Activated B cell treated with CpG ODN at 0.5 μM for 24 hours (primary cell): ENCODE measurements at regions of chr12 and their contacts with region 1.

Region 1: GRCh38 chr12:64486657-64487056 is 34.7 kb downstream of the TBK1 start:
- DNase-seq: no peak
- ATAC-seq: no peak
- H3K4me3 Mint-ChIP-seq: no peak overlapping the region
- H3K27ac Mint-ChIP-seq: no peak overlapping the region
- H3K4me1 Mint-ChIP-seq: no peaks in the 10 kb centered on the region
- H3K27me3 Mint-ChIP-seq: no peaks in the 10 kb centered on the region
- CTCF ChIP-seq: no peak

Region 2: DNA sequence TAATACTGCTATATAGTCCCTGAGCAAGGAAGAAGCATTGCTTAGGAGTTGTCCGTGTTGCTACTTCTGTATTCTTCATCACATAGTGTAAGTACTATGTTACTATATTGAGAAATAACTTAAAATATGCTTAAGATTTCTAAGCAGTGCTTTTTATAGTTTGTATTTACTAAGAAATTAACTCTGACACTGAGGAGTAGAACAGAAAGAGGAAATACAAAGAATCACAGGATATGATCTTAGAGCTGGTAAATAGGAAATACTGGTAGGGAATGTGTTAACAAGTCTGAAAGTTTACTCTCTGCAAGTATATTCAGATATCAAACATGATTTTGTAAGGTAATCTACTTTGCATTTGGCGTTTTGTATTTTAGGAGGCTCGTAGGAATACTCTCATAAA is 67.0 kb before region 1 on chr12:
- CTCF ChIA-PET with region 1: no interaction called
- POLR2A ChIA-PET with region 1: no interaction called
- intact Hi-C with region 1: loop called (anchors 5 kb)
- DNase-seq: no peak
- ATAC-seq: no peak
- H3K4me3 Mint-ChIP-seq: no peak overlapping the region
- H3K27ac Mint-ChIP-seq: no peak overlapping the region
- H3K4me1 Mint-ChIP-seq: no peaks in the 10 kb centered on the region
- H3K27me3 Mint-ChIP-seq: no peaks in the 10 kb centered on the region
- CTCF ChIP-seq: no peak